ENCODE measurements at regions of chr2 and their contacts with region 1.

Region 1: DNA sequence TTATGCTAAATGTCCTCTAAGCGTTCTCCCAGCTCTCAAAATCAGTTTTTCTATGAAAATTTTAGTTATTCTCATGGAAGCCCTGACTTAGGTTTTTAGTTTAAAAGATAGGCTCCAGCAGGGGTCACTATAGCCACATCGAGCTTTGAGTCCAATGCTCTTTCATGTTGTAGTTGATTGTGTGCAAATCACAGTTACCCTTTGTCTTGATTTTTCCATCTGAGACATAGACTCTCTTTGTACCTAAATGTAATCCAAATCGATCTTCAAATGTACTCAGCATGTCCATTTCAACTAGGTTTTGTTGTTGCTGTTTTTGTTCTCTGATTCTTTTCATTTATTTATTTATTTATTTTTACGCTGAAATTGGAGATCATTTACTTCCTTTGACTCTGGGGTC is 26.4 kb upstream of the MSTN start:
- H3K4me3 Mint-ChIP-seq: no peak overlapping the region
- H3K27ac Mint-ChIP-seq: no peak overlapping the region
- H3K4me1 Mint-ChIP-seq: no peaks in the 10 kb centered on the region
- H3K27me3 Mint-ChIP-seq: no peaks in the 10 kb centered on the region

Region 2: GRCh38 chr2:190031971-190032618 is 56.8 kb before region 1 on chr2:
- intact Hi-C with region 1: no loop called
- H3K4me3 Mint-ChIP-seq: no peak overlapping the region
- H3K27ac Mint-ChIP-seq: no peak overlapping the region
- H3K4me1 Mint-ChIP-seq: no peaks in the 10 kb centered on the region
- H3K27me3 Mint-ChIP-seq: no peaks in the 10 kb centered on the region

Region 3: GRCh38 chr2:190062053-190062452 is 26.9 kb before region 1 on chr2:
- intact Hi-C with region 1: no loop called
- H3K4me3 Mint-ChIP-seq: no peak overlapping the region
- H3K27ac Mint-ChIP-seq: no peak overlapping the region
- H3K4me1 Mint-ChIP-seq: no peaks in the 10 kb centered on the region
- H3K27me3 Mint-ChIP-seq: no peaks in the 10 kb centered on the region

Region 4: DNA sequence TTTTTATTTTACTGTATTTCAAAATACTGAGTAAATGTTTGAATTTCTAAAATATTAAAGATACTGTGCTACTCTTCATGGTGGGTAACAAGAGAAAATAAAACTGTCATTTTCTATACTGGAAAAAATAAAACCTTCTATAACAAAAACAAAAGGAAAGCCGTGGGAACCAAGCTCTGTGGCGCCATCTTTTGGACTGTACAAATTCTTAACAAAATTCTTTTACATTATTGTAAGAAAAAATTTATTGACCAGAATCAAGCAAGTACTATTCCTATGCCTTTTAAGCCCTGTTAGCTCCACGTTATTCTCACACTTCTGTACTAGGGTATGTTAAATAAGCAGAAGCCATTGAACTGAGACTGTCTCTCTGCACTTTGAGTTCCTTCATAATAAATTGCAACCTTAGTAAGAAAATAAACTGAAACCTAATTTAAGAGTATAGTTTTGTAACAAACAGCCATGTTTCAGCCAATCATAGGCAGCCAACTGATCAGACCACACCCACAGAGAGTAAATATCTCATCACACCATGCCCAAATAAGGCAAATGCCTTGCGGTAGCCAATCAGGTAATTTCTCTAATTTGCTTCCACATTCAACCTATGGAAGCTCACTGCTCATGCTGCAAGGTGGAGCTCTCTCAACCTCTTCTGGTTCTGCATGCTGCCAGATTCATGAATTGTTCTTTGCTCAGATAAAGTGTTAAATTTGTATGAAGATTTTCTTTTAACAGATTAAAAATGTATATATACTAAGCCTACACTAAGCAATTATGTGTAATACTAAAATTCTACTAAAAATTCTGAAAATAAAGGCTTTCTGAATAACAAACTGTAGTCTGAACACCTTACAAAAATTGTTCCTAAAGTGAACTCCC is 188.6 kb after region 1 on chr2:
- intact Hi-C with region 1: loop called (anchors 2 kb)
- H3K4me3 Mint-ChIP-seq: no peak overlapping the region
- H3K27ac Mint-ChIP-seq: no peak overlapping the region
- H3K4me1 Mint-ChIP-seq: peaks cover 5% of the 10 kb centered on the region
- H3K27me3 Mint-ChIP-seq: no peaks in the 10 kb centered on the region

Region 5: GRCh38 chr2:190313880-190314279 is 225.0 kb after region 1 on chr2:
- intact Hi-C with region 1: loop called (anchors 2 kb)
- H3K4me3 Mint-ChIP-seq: no peak overlapping the region
- H3K27ac Mint-ChIP-seq: no peak overlapping the region
- H3K4me1 Mint-ChIP-seq: peaks cover 10% of the 10 kb centered on the region
- H3K27me3 Mint-ChIP-seq: no peaks in the 10 kb centered on the region

Region 6: DNA sequence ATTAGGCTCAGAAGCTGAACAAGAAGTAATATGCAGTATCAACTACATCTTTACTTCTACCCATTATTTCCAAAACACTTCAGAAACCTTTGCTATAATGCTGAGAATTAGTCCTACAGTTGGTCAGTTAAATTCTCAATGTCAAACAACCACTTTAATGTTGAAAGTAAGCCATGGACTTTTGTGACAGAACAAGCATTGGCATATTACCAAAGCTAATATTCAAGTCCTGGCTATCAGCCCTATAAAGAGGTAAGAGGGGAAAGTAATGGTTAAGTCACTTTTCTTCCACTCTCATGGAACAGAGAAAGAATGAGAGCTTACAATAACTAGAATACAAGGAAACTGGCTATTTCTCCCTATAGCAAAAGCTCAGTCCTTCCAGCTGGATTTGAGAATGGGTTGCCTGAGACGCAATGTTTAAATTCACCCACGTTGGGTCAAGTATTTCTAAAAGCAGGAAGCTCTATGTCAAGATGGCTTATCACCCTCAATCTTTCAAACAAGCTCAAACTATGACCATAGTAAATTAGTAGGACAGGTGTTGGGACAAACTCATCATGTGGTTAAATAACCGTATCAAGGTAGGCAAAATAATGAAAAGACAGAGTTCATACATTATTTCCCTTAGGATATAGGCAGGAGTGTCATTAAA is 287.8 kb after region 1 on chr2:
- intact Hi-C with region 1: loop called (anchors 2 kb)
- H3K4me3 Mint-ChIP-seq: no peak overlapping the region
- H3K27ac Mint-ChIP-seq: no peak overlapping the region
- H3K4me1 Mint-ChIP-seq: no peaks in the 10 kb centered on the region
- H3K27me3 Mint-ChIP-seq: no peaks in the 10 kb centered on the region

Region 7: DNA sequence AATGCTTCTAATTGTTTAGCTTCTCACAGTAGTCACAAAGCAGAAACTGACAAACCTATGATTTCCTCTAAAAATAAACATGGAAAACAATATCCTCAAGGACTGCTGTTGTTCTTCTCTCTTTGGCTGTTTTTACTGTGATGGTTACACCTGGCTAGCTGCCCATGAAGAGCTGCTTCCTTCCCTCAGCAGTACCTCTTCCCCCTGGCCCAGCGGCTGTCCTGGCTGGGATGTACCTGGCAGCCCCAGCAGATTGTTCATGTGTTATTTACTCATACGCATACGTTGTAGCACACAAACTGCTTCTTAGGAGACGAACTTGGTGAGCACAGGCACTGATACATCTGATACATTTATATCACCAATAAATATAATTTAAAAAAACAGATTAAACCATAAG is 418.2 kb after region 1 on chr2:
- intact Hi-C with region 1: loop called (anchors 5 kb)
- H3K4me3 Mint-ChIP-seq: no peak overlapping the region
- H3K27ac Mint-ChIP-seq: peak overlapping the region; percentile 10
- H3K4me1 Mint-ChIP-seq: peaks cover 8% of the 10 kb centered on the region
- H3K27me3 Mint-ChIP-seq: no peaks in the 10 kb centered on the region

Region 8: DNA sequence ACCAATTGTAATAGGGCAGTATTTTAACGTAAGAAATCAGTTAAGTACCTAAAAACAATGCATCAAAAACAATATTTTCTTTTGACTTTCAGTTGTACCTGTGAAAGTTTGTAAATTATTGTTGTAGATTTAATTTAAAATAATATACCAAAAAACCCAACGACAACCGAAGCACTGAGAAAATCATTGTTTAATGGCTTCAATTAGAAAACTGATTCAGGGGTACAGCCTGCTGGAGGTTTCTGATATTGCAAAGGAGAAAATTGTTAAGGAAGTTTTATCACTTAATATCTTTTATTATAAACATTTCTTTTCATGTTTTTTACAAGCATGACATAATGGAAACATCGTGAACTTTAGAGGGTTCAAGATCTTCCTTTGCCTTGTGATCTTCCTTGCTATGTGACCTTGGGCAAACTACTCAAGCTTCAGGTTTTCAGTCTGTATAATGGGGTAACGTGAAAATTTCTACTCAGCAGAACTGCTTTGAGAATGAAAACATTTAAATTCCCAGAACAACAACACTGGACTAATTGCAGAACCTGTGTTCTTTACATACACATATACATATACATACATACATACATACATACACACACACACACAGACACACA is 715.4 kb after region 1 on chr2:
- intact Hi-C with region 1: loop called (anchors 2 kb)
- H3K4me3 Mint-ChIP-seq: no peak overlapping the region
- H3K27ac Mint-ChIP-seq: no peak overlapping the region
- H3K4me1 Mint-ChIP-seq: peaks cover 6% of the 10 kb centered on the region
- H3K27me3 Mint-ChIP-seq: no peaks in the 10 kb centered on the region

Measured in dendritic cell treated with granulocyte-macrophage colony-stimulating factor and Interleukin-4, amounts not matched to agents 40 ng/mL and 50 ng/mL, for 4 days (primary cell).